ENCODE measurements at regions of chr6 and their contacts with region 1.

Region 1: DNA sequence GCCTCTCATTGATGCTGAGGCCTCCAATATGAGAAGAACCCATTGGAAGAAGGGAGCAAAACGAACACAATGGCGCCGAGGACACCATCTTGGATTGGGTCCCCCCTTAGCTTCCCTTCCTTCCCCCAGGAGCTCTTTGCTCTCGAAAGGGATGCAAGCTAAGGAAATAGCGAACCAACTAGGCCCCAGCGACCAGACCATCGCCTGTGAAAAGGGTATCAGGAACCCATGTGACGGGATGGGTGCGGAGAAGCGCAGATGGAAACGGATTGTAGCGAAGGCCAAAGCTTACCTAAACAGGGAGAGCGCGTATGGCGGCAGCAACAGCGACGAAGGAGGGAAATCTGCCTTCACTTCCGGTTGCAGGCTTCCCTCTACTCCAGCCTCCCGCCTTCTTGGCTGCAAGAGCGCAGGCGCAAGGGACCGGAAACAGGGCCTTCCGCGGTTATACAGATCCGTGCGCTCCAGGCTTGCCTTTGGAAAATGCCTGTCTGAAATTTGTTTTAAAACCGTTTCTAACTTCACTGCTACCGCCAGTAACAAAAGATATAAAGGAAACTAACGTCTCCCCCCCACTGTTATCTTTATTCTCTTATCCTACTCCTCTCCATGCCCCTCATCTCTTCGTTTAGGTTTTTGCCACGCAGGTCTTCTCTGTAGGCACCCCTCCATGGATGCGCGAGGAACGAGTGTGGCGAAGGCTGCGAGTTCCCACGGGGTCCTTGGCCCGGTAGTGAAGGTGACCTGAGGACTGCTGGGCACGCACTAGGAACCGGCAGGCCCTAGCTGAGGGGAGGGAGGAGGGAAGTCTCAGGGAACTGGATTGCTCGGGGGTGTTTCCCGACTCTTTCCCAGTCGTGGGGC is at the start of gene DDX39B:
- DNase-seq: peak; percentile 80
- ATAC-seq: peak; percentile 77
- H3K4me3 Mint-ChIP-seq: peak within 1 kb of the TSS; percentile 98
- H3K27ac Mint-ChIP-seq: peak within 1 kb of the TSS; percentile 97
- H3K4me1 Mint-ChIP-seq: peaks cover 58% of the 10 kb centered on the region
- H3K27me3 Mint-ChIP-seq: no peaks in the 10 kb centered on the region
- CTCF ChIP-seq: no peak
- total RNA-seq, gene DDX39B: 431 and 484 TPM in 2 replicates

Region 2: GRCh38 chr6:31462964-31463870 is 78.7 kb before region 1 on chr6:
- CTCF ChIA-PET with region 1: no interaction called
- POLR2A ChIA-PET with region 1: interaction called, 15 read pairs
- intact Hi-C with region 1: no loop called
- DNase-seq: peak; percentile 79
- ATAC-seq: peak; percentile 96
- H3K4me3 Mint-ChIP-seq: peak overlapping the region; percentile 100
- H3K27ac Mint-ChIP-seq: peak overlapping the region; percentile 98
- H3K4me1 Mint-ChIP-seq: peaks cover 61% of the 10 kb centered on the region
- H3K27me3 Mint-ChIP-seq: no peaks in the 10 kb centered on the region
- CTCF ChIP-seq: no peak

Region 3: DNA sequence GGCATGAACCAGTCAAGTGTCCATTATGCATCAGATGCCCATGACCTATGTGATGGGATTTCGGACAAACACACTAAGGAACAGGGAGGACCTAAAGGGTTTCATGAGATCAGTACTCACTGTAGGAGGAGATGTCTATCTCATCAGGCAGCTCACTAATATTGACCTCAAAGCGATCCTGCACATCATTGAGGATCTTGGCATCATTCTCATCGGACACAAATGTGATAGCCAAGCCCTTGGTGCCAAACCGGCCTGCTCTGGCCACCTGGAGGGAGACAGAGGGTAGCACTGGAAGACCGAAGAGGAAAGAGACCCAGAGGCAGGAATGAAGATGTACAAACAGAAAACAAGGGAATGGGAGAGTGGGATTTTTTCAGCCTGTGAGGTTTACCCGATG is 11.2 kb before region 1 on chr6:
- CTCF ChIA-PET with region 1: no interaction called
- POLR2A ChIA-PET with region 1: interaction called, 14 read pairs
- intact Hi-C with region 1: no loop called
- DNase-seq: no peak
- ATAC-seq: no peak
- H3K4me3 Mint-ChIP-seq: no peak overlapping the region
- H3K27ac Mint-ChIP-seq: no peak overlapping the region
- H3K4me1 Mint-ChIP-seq: peaks cover 4% of the 10 kb centered on the region
- H3K27me3 Mint-ChIP-seq: no peaks in the 10 kb centered on the region
- CTCF ChIP-seq: no peak

Region 4: GRCh38 chr6:31575335-31575901 is 33.5 kb after region 1 on chr6 and contains the start of gene TNF:
- CTCF ChIA-PET with region 1: interaction called, 611 read pairs
- POLR2A ChIA-PET with region 1: interaction called, 44 read pairs
- intact Hi-C with region 1: no loop called
- DNase-seq: peak; percentile 66
- ATAC-seq: peak; percentile 51
- H3K4me3 Mint-ChIP-seq: peak within 1 kb of the TSS; percentile 98
- H3K27ac Mint-ChIP-seq: peak within 1 kb of the TSS; percentile 99
- H3K4me1 Mint-ChIP-seq: peaks cover 95% of the 10 kb centered on the region
- H3K27me3 Mint-ChIP-seq: no peaks in the 10 kb centered on the region
- CTCF ChIP-seq: no peak
- total RNA-seq, gene TNF: 135 and 139 TPM in 2 replicates

Region 5: GRCh38 chr6:31597006-31597405 is 55.1 kb after region 1 on chr6:
- CTCF ChIA-PET with region 1: interaction called, 773 read pairs
- POLR2A ChIA-PET with region 1: interaction called, 234 read pairs
- intact Hi-C with region 1: loop called (anchors 1 kb)
- DNase-seq: no peak
- ATAC-seq: peak; percentile 73
- H3K4me3 Mint-ChIP-seq: peak overlapping the region; percentile 25
- H3K27ac Mint-ChIP-seq: peak overlapping the region; percentile 75
- H3K4me1 Mint-ChIP-seq: peaks cover 58% of the 10 kb centered on the region
- H3K27me3 Mint-ChIP-seq: no peaks in the 10 kb centered on the region
- CTCF ChIP-seq: no peak

Region 6: GRCh38 chr6:31660381-31661261 is 118.7 kb after region 1 on chr6 and contains the start of gene C6orf47:
- CTCF ChIA-PET with region 1: no interaction called
- POLR2A ChIA-PET with region 1: interaction called, 15 read pairs
- intact Hi-C with region 1: loop called (anchors 1 kb)
- DNase-seq: peak; percentile 77
- ATAC-seq: peak; percentile 68
- H3K4me3 Mint-ChIP-seq: peak within 1 kb of the TSS; percentile 88
- H3K27ac Mint-ChIP-seq: peak within 1 kb of the TSS; percentile 85
- H3K4me1 Mint-ChIP-seq: peaks cover 75% of the 10 kb centered on the region
- H3K27me3 Mint-ChIP-seq: no peaks in the 10 kb centered on the region
- CTCF ChIP-seq: no peak
- total RNA-seq, gene C6orf47: 29.0 and 29.3 TPM in 2 replicates

Region 7: DNA sequence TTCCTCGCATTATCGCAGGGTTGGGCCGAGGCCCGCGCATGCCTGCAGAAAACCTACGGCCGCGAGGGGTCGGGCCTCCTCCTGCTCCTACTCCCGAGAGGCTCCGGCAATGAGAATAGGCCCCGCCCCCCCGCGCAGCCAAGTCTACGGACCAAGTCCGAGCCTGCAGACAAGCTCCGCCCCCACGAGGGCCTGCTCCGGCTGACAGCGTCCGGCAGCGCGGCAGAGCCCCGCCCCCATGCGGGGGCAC is 653.7 kb after region 1 on chr6:
- CTCF ChIA-PET with region 1: no interaction called
- POLR2A ChIA-PET with region 1: interaction called, 6 read pairs
- intact Hi-C with region 1: loop called (anchors 10 kb)
- DNase-seq: peak; percentile 99
- ATAC-seq: peak; percentile 83
- H3K4me3 Mint-ChIP-seq: peak overlapping the region; percentile 99
- H3K27ac Mint-ChIP-seq: peak overlapping the region; percentile 100
- H3K4me1 Mint-ChIP-seq: peaks cover 57% of the 10 kb centered on the region
- H3K27me3 Mint-ChIP-seq: peaks cover 1% of the 10 kb centered on the region
- CTCF ChIP-seq: no peak

Measured in activated B cell treated with CpG ODN at 0.5 μM for 24 hours (primary cell).